GM18951 (cell line): ENCODE measurements at regions of chr5 and their contacts with region 1.

Region 1: DNA sequence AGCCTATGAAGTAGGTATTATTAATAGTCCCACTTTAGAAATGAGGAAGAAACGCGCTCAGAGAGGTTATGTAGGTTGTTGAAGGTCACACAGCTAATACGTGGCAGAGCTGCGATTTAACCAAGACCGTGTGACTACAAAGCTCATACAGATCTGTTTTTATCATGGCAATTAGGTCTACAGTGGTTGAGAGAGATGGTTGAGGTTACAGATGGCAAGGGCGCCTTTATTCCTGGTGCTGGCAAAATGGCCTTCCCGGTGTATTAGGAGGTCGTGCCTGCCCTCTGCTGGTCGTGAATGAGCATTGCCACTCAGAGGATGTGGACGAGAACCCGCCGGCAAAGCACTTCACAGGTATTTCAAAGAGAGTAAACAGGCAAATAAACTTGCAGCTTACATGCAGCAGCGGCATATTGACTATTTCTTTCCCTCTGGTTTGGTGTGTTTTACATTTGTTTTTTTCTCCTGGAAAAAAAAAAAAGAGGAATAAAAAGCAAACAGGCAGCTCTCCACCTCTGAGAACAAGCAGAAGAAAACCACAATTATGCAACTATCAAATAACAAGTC is 65.3 kb upstream of the EGFLAM start:
- POLR2A ChIP-seq: no peak

Region 2: GRCh38 chr5:37412515-37413277 is 780.4 kb before region 1 on chr5:
- in situ Hi-C with region 1: loop called (anchors 25 kb)
- POLR2A ChIP-seq: no peak

Region 3: DNA sequence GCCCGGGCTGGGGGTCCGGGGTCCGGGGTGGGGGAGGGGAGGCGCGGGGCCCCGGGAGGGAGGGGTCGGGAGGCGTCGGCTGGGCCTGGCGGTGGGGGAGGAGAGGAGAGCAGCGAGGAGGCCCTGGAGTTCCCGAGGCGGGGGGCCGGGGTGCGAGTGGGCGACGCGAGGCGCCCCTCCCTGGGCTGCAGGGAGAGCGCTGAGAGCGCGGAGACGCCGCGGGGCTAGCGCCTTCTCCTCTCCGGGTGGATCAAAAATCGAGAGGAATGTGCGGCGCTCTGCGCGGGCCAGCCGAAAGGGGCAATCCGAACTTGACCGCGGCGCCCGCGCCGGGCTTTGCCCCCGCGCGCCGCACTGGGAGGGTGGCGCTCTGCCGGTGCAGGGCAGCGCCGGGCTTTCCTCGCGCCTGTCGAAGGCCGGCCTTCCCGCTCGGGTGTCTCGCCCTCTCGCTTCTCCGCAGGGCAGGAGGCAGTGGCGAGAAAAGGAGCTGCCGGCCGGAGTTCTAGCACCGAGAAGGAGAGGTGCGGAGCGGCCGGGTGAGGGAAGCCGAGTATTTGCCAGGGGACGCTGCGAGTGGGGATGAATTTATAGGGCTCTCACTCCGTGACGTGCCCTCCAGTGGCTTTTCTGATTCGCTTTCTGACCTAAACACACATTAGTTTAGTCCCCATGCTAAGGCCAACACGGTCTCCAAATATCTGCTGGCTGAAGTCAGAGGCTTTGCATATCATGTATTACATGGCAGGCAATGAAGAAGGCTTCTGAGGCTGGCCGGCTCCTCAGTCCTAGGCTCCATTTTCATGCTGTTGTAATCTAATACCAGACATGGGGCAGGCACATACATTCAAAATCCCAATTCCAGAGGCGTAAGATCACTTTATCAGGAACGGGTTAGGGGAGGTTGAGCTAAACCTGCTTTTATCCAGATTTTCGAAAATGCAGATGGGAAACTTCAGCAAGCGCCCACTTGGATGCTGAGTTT is 352.8 kb before region 1 on chr5:
- in situ Hi-C with region 1: loop called (anchors 10 kb)
- POLR2A ChIP-seq: no peak

Region 4: DNA sequence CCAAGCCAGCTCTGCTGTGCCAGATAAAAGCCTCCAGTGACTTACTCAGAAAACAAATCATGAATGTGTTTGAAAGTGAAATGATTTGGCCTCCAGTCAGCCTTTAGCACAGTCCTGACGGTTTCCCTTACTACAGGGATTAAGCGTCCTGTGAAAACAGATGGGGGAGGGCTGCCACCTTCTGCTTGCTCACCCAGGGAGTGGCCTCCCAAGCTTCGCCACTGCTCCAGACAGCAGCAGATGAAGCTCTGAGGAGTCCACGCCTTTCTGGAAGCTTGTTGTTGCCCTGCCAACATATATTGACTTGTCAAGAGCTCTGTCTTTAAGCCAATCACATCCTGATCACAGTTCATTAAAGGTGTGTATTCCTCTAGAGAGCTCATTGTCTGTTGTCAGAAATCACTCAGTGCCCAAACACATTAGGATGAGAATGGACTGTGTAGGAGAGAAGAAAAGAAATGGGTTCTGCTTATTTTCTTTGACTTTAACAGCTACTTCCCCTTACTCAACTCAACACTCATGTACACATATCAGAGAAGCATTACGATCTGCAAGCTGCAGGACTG is 1031.2 kb after region 1 on chr5:
- in situ Hi-C with region 1: no loop called
- POLR2A ChIP-seq: no peak